ENCODE measurements at regions of chr1 and their contacts with region 1.

Region 1: DNA sequence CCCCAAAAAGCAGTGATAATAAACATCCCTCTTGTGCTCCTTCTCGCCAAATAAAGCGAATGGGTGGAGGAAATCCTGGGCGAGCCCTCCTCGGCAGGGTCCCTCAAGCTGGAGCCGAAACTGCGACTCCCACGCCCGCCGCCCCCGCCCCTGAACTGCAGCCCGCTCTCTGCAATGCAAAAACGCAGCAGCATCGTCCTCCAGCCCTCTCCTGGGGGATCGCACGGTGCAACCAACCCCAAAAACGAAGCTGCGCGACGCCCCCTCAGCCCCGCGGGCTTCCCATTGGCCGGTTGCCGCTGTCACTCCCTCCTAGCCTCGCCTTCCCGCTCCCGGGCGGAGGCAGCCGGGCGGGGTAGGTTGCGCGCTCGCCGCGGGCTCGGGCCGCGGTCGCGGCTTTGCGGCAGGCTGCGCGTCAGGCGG is at the start of gene TMCC2:
- DNase-seq: peak; percentile 91
- H3K4me3 Mint-ChIP-seq: peak within 1 kb of the TSS; percentile 63
- H3K27ac Mint-ChIP-seq: no peak within 1 kb of the TSS
- H3K4me1 Mint-ChIP-seq: peaks cover 20% of the 10 kb centered on the region
- H3K27me3 Mint-ChIP-seq: no peaks in the 10 kb centered on the region
- CTCF ChIP-seq: no peak
- total RNA-seq, gene TMCC2: 0.54 and 0.79 TPM in 2 replicates

Region 2: DNA sequence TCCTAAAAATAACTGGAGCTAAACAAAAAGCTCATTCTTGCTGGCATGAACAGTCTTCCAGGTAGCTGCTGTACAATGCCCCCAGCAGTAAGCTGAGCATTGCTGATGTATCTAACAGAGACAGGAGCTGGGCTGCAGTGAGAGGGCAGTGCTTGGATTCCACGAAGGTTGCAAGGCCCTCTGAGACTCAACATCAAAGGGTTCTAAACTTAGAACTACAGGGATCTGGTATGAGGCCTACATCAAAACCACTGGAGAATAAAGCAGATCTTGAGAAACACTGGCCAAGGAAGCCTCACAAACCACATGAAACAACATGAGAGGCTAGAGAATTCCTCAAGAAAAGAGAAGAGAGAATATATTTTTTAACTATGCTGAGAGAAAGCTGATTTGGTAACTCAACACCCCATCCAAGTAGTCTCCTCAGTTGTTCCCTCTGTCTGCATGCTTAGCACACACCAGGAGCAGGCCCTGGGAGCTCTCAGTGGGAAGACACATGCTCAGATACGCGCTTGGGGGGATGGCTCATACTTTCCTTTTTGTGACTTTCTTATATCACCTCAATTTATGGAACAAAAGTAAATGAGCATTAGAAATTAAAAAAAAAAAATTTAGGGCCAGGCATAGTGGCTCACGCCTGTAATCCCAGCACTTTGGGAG is 43.8 kb before region 1 on chr1:
- CTCF ChIA-PET with region 1: interaction called, 15 read pairs
- POLR2A ChIA-PET with region 1: no interaction called
- intact Hi-C with region 1: no loop called
- DNase-seq: no peak
- H3K4me3 Mint-ChIP-seq: no peak overlapping the region
- H3K27ac Mint-ChIP-seq: peak overlapping the region; percentile 29
- H3K4me1 Mint-ChIP-seq: peaks cover 14% of the 10 kb centered on the region
- H3K27me3 Mint-ChIP-seq: no peaks in the 10 kb centered on the region
- CTCF ChIP-seq: no peak

Region 3: GRCh38 chr1:205217418-205217817 is 10.2 kb before region 1 on chr1:
- CTCF ChIA-PET with region 1: interaction called, 19 read pairs
- POLR2A ChIA-PET with region 1: interaction called, 71 read pairs
- intact Hi-C with region 1: no loop called
- DNase-seq: no peak
- H3K4me3 Mint-ChIP-seq: no peak overlapping the region
- H3K27ac Mint-ChIP-seq: no peak overlapping the region
- H3K4me1 Mint-ChIP-seq: no peaks in the 10 kb centered on the region
- H3K27me3 Mint-ChIP-seq: peaks cover 12% of the 10 kb centered on the region
- CTCF ChIP-seq: no peak

Region 4: GRCh38 chr1:205243350-205244191 is 16.0 kb after region 1 on chr1:
- CTCF ChIA-PET with region 1: interaction called, 45 read pairs
- POLR2A ChIA-PET with region 1: interaction called, 11 read pairs
- intact Hi-C with region 1: loop called (anchors 2 kb)
- DNase-seq: no peak
- H3K4me3 Mint-ChIP-seq: no peak overlapping the region
- H3K27ac Mint-ChIP-seq: no peak overlapping the region
- H3K4me1 Mint-ChIP-seq: peaks cover under 1% of the 10 kb centered on the region
- H3K27me3 Mint-ChIP-seq: no peaks in the 10 kb centered on the region
- CTCF ChIP-seq: no peak

Region 5: GRCh38 chr1:205273551-205273982 is 46.0 kb after region 1 on chr1:
- CTCF ChIA-PET with region 1: interaction called, 41 read pairs
- POLR2A ChIA-PET with region 1: interaction called, 3 read pairs
- intact Hi-C with region 1: no loop called
- DNase-seq: peak; percentile 93
- H3K4me3 Mint-ChIP-seq: no peak overlapping the region
- H3K27ac Mint-ChIP-seq: no peak overlapping the region
- H3K4me1 Mint-ChIP-seq: peaks cover 27% of the 10 kb centered on the region
- H3K27me3 Mint-ChIP-seq: peaks cover 9% of the 10 kb centered on the region
- CTCF ChIP-seq: peak; percentile 100